GM12878 (cell line): ENCODE measurements at regions of chr14 and their contacts with region 1.

Region 1: GRCh38 chr14:58072288-58073071 is 79.5 kb downstream of the ARMH4 start:
- DNase-seq: peak; percentile 13
- ATAC-seq: peak; percentile 91
- H3K4me3 ChIP-seq: no peak overlapping the region
- H3K27ac ChIP-seq: no peak overlapping the region
- H3K4me1 ChIP-seq: no peaks in the 10 kb centered on the region
- H3K27me3 ChIP-seq: no peaks in the 10 kb centered on the region
- CTCF ChIP-seq: peak; percentile 57 to 70 (median 69); a peak in 5 of 6 replicates
- EP300 ChIP-seq: no peak
- POLR2A ChIP-seq: no peak
- RAD21 ChIP-seq: peak; percentile 82

Region 2: DNA sequence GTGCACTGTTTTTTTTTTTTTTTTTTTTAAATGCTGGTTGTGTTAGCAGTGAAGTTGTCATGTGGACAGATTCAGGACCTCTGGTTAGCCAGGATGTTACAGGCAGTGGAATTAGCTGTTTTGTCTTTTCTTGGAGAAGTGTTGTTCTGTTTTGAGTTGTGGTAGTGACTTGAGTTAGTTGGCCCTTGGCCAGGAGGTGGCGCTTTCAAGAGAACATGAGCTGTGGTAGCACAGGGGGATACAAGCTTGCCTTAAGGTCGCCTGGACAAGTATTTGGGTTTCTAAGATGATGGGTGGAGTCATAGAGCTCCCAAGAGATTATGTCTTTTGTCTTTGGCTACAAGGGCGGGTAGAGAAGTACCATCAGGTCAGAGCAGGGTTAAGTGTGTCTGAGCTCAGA is 545.5 kb before region 1 on chr14:
- CTCF ChIA-PET with region 1: interaction called, 11 read pairs
- POLR2A ChIA-PET with region 1: no interaction called
- RAD21 ChIA-PET with region 1: interaction called, 3 read pairs
- SMC1A ChIA-PET with region 1: no interaction called
- in situ Hi-C with region 1: no loop called
- intact Hi-C with region 1: no loop called
- DNase-seq: no peak
- ATAC-seq: peak; percentile 60
- H3K4me3 ChIP-seq: no peak overlapping the region
- H3K27ac ChIP-seq: no peak overlapping the region
- H3K4me1 ChIP-seq: no peaks in the 10 kb centered on the region
- H3K27me3 ChIP-seq: no peaks in the 10 kb centered on the region
- CTCF ChIP-seq: 0 out of 6 replicates have a peak, but pooled peaks of 1 of the 3 experiments have one; percentile 12
- EP300 ChIP-seq: no peak
- POLR2A ChIP-seq: no peak
- RAD21 ChIP-seq: no peak

Region 3: GRCh38 chr14:57692671-57693070 is 379.8 kb before region 1 on chr14:
- CTCF ChIA-PET with region 1: interaction called, 7 read pairs
- POLR2A ChIA-PET with region 1: no interaction called
- RAD21 ChIA-PET with region 1: interaction called, 3 read pairs
- SMC1A ChIA-PET with region 1: interaction called, 4 read pairs
- in situ Hi-C with region 1: no loop called
- intact Hi-C with region 1: loop called (anchors 1 kb)
- DNase-seq: no peak
- ATAC-seq: peak; percentile 61
- H3K4me3 ChIP-seq: no peak overlapping the region
- H3K27ac ChIP-seq: no peak overlapping the region
- H3K4me1 ChIP-seq: no peaks in the 10 kb centered on the region
- H3K27me3 ChIP-seq: no peaks in the 10 kb centered on the region
- CTCF ChIP-seq: peak; percentile 33 to 40 (median 35); a peak in 4 of 6 replicates
- EP300 ChIP-seq: no peak
- POLR2A ChIP-seq: no peak
- RAD21 ChIP-seq: peak; percentile 56; the same call in 1 of the 2 replicates